CD8-positive, alpha-beta memory T cell (primary cell): ENCODE measurements at regions of chr12 and their contacts with region 1.

Region 1: DNA sequence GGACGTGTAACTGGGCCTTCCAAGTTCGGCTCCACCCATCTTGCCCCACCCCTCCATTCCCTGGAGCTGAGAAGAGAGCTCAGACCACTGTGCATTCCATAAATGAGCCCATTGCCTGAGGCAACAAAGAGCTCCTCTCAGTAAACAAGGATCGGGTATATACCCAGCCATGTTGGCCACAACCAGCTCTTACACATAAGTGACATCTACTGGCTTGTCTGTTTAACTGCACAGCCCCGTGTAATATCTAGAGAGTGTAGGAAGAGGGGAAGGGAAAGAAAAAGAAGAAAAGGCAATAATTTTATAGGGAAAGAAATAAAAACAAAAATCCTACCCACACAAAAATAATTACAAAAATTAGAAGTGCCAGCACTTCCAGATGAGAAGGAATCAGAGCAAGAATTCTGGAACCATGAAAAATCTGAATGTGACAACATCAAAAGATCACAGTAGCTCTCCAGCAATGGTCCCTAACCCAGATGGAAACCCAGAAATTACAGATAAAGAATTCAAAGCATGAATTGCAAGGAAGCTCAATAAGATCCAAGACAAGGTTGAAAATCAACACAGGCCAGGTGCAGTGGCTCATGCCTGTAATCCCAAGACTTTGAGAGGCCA is 308.1 kb downstream of the RPAP3 start:
- DNase-seq: peak; percentile 14 to 69 (median 56)
- H3K4me3 ChIP-seq: peak overlapping the region; percentile 17
- H3K4me3 Mint-ChIP-seq: peak overlapping the region in 6 of 7 donors; percentile 60 to 84 (median 72)
- H3K27ac ChIP-seq: no peak overlapping the region
- H3K27ac Mint-ChIP-seq: peak overlapping the region; percentile 76 to 99 (median 95)
- H3K4me1 ChIP-seq: peaks cover 38% of the 10 kb centered on the region
- H3K4me1 Mint-ChIP-seq: peaks cover 46 to 62% (median 56%) of the 10 kb centered on the region in 3 donors
- H3K27me3 ChIP-seq: no peaks in the 10 kb centered on the region
- H3K27me3 Mint-ChIP-seq: no peaks in the 10 kb centered on the region

Region 2: GRCh38 chr12:47079468-47079980 is 318.2 kb before region 1 on chr12 and contains the starts of genes AMIGO2 and PCED1B:
- CTCF ChIA-PET with region 1: interaction called, 38 read pairs
- POLR2A ChIA-PET with region 1: interaction called, 3 read pairs
- DNase-seq: peak; percentile 44 to 77 (median 52)
- H3K4me3 ChIP-seq: peak within 1 kb of the TSS; percentile 89
- H3K4me3 Mint-ChIP-seq: peak within 1 kb of the TSS; percentile 91 to 97 (median 95)
- H3K27ac ChIP-seq: peak within 1 kb of the TSS; percentile 83
- H3K27ac Mint-ChIP-seq: peak within 1 kb of the TSS; percentile 87 to 99 (median 97)
- H3K4me1 ChIP-seq: peaks cover 58% of the 10 kb centered on the region
- H3K4me1 Mint-ChIP-seq: peaks cover 74 to 79% (median 79%) of the 10 kb centered on the region in 3 donors
- H3K27me3 ChIP-seq: no peaks in the 10 kb centered on the region
- H3K27me3 Mint-ChIP-seq: peaks cover 0 to 5% of the 10 kb centered on the region in 2 donors
- total RNA-seq, gene AMIGO2: 16.2 to 16.6 TPM
- total RNA-seq, gene PCED1B: 52.8 to 56.9 TPM

Region 3: GRCh38 chr12:47216150-47216677 is 181.6 kb before region 1 on chr12:
- CTCF ChIA-PET with region 1: interaction called, 32 read pairs
- POLR2A ChIA-PET with region 1: interaction called, 10 read pairs
- DNase-seq: peak; percentile 50 to 84 (median 75)
- H3K4me3 ChIP-seq: peak overlapping the region; percentile 92
- H3K4me3 Mint-ChIP-seq: peak overlapping the region; percentile 89 to 95 (median 94)
- H3K27ac ChIP-seq: peak overlapping the region; percentile 85
- H3K27ac Mint-ChIP-seq: peak overlapping the region; percentile 87 to 100 (median 94)
- H3K4me1 ChIP-seq: peaks cover 8% of the 10 kb centered on the region
- H3K4me1 Mint-ChIP-seq: peaks cover 17 to 43% (median 37%) of the 10 kb centered on the region in 3 donors
- H3K27me3 ChIP-seq: no peaks in the 10 kb centered on the region
- H3K27me3 Mint-ChIP-seq: peaks cover 0 to 2% of the 10 kb centered on the region in 2 donors

Region 4: GRCh38 chr12:47235313-47236040 is 162.3 kb before region 1 on chr12:
- CTCF ChIA-PET with region 1: no interaction called
- POLR2A ChIA-PET with region 1: no interaction called
- DNase-seq: no peak
- H3K4me3 ChIP-seq: no peak overlapping the region
- H3K4me3 Mint-ChIP-seq: peak overlapping the region in 1 of 7 donors; percentile 50
- H3K27ac ChIP-seq: no peak overlapping the region
- H3K27ac Mint-ChIP-seq: peak overlapping the region in 2 of 8 donors; percentile 27 to 81
- H3K4me1 ChIP-seq: peaks cover 57% of the 10 kb centered on the region
- H3K4me1 Mint-ChIP-seq: peaks cover 62 to 85% (median 71%) of the 10 kb centered on the region in 3 donors
- H3K27me3 ChIP-seq: no peaks in the 10 kb centered on the region
- H3K27me3 Mint-ChIP-seq: no peaks in the 10 kb centered on the region

Region 5: DNA sequence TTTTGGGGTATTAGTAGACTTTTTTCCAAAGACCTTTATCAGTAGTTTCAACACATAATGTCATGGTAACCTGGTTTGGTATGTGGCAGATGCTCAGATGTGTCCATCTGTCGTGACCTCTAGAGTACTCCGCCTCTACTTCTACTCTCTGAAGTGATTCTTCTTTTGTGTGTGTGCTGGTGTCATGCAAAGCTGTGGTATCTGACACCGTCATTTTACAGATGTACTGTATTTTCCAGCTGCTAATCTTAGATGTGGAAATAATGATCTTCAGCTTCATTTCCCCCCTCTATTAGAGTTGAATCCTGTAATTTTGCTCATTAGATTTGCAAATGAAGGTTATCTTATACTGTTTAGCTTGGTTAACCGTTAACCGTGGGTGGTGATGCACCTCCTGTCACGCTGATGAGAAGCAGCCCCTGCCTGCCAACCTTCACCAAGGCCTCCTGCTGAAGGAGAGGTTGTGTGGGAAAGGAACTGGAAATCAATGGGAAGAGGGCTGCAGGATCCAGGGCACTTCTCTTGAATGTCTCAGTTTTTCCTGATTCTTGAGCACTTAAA is 95.6 kb before region 1 on chr12:
- CTCF ChIA-PET with region 1: interaction called, 31 read pairs
- POLR2A ChIA-PET with region 1: interaction called, 4 read pairs
- DNase-seq: no peak
- H3K4me3 ChIP-seq: no peak overlapping the region
- H3K4me3 Mint-ChIP-seq: peak overlapping the region in 1 of 7 donors; percentile 40
- H3K27ac ChIP-seq: no peak overlapping the region
- H3K27ac Mint-ChIP-seq: peak overlapping the region in 7 of 8 donors; percentile 1 to 65 (median 43)
- H3K4me1 ChIP-seq: peaks cover 29% of the 10 kb centered on the region
- H3K4me1 Mint-ChIP-seq: peaks cover 54 to 63% (median 58%) of the 10 kb centered on the region in 3 donors
- H3K27me3 ChIP-seq: no peaks in the 10 kb centered on the region
- H3K27me3 Mint-ChIP-seq: no peaks in the 10 kb centered on the region

Region 6: GRCh38 chr12:47321436-47321835 is 76.3 kb before region 1 on chr12:
- CTCF ChIA-PET with region 1: interaction called, 17 read pairs
- POLR2A ChIA-PET with region 1: interaction called, 3 read pairs
- DNase-seq: no peak
- H3K4me3 ChIP-seq: no peak overlapping the region
- H3K4me3 Mint-ChIP-seq: no peak overlapping the region
- H3K27ac ChIP-seq: no peak overlapping the region
- H3K27ac Mint-ChIP-seq: peak overlapping the region in 3 of 8 donors; percentile 17 to 56 (median 52)
- H3K4me1 ChIP-seq: peaks cover 18% of the 10 kb centered on the region
- H3K4me1 Mint-ChIP-seq: peaks cover 34 to 36% (median 36%) of the 10 kb centered on the region in 3 donors
- H3K27me3 ChIP-seq: no peaks in the 10 kb centered on the region
- H3K27me3 Mint-ChIP-seq: no peaks in the 10 kb centered on the region

Region 7: DNA sequence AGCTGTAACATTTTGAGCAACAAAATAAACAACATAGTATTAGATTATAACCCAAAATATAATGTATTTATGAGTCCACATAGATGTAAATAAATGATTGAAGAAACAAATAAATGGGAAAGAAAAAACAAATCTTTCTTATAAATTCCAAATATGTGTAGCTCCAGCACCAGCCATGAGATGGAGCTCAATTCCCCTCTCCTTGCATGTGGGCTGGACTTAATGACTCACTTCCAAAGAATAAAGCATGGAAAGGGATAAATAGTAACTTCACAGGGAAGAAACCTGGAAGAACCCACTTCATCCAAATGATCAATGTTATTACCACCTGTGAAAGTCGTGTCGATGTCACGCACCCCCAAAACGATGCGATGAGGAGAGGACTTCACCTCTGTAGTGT is 149.3 kb after region 1 on chr12:
- CTCF ChIA-PET with region 1: no interaction called
- POLR2A ChIA-PET with region 1: no interaction called
- DNase-seq: no peak
- H3K4me3 ChIP-seq: no peak overlapping the region
- H3K4me3 Mint-ChIP-seq: no peak overlapping the region
- H3K27ac ChIP-seq: no peak overlapping the region
- H3K27ac Mint-ChIP-seq: no peak overlapping the region
- H3K4me1 ChIP-seq: no peaks in the 10 kb centered on the region
- H3K4me1 Mint-ChIP-seq: peaks cover 0 to 4% (median 0%) of the 10 kb centered on the region in 3 donors
- H3K27me3 ChIP-seq: no peaks in the 10 kb centered on the region
- H3K27me3 Mint-ChIP-seq: peaks cover 12 to 14% of the 10 kb centered on the region in 2 donors

Region 8: GRCh38 chr12:47576289-47576945 is 178.6 kb after region 1 on chr12:
- CTCF ChIA-PET with region 1: no interaction called
- POLR2A ChIA-PET with region 1: no interaction called
- DNase-seq: no peak
- H3K4me3 ChIP-seq: no peak overlapping the region
- H3K4me3 Mint-ChIP-seq: no peak overlapping the region
- H3K27ac ChIP-seq: no peak overlapping the region
- H3K27ac Mint-ChIP-seq: no peak overlapping the region
- H3K4me1 ChIP-seq: no peaks in the 10 kb centered on the region
- H3K4me1 Mint-ChIP-seq: no peaks in the 10 kb centered on the region
- H3K27me3 ChIP-seq: no peaks in the 10 kb centered on the region
- H3K27me3 Mint-ChIP-seq: peaks cover 11 to 21% of the 10 kb centered on the region in 2 donors